ENCODE measurements at regions of chr3 and their contacts with region 1.

Region 1: DNA sequence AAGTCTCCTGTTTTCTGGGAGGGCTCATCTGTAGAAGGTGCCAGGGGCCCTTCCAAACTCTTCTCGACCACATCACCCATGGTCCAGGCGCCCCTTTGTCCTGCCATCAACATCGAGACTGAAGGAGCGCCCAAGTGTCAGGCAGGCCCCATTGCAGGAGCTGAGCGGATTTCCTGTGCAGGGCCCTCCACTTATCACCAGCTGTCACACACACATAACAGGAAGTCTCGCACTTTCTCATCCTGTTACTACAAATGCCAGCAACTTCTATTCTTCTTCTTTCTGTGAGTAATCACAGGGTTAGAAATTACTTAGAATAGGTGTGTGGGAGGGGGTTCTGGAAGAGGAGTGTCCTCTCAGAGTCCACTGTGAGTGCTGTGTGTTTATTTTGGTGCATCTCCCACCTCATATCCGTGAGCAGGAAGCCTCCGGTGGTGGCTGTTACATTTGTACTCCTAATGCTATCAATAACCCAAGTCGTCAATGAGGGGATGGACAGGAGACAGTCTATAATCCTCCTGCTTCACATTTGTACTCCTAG is at the start of gene KLHL6:
- DNase-seq: peak; percentile 47 to 81 (median 74)
- ATAC-seq: peak; percentile 93
- H3K4me3 ChIP-seq: peak within 1 kb of the TSS; percentile 82
- H3K4me3 Mint-ChIP-seq: peak within 1 kb of the TSS; percentile 95 to 100 (median 98)
- H3K27ac ChIP-seq: peak within 1 kb of the TSS; percentile 78
- H3K27ac Mint-ChIP-seq: peak within 1 kb of the TSS; percentile 95 to 100 (median 98)
- H3K4me1 ChIP-seq: peaks cover 15 to 17% of the 10 kb centered on the region in 2 donors
- H3K4me1 Mint-ChIP-seq: peaks cover 46 to 58% (median 50%) of the 10 kb centered on the region in 7 donors
- H3K27me3 ChIP-seq: no peaks in the 10 kb centered on the region
- H3K27me3 Mint-ChIP-seq: no peaks in the 10 kb centered on the region
- total RNA-seq, gene KLHL6: 37.7 to 72.9 (median 41.5) TPM

Region 2: GRCh38 chr3:183285828-183286457 is 269.7 kb before region 1 on chr3:
- CTCF ChIA-PET with region 1: no interaction called
- POLR2A ChIA-PET with region 1: no interaction called
- intact Hi-C with region 1: loop called in 1 of 2 experiments (anchors 10 kb)
- DNase-seq: peak; percentile 60 to 96 (median 83)
- ATAC-seq: peak; percentile 97
- H3K4me3 ChIP-seq: no peak overlapping the region
- H3K4me3 Mint-ChIP-seq: peak overlapping the region in 9 of 10 donors; percentile 47 to 81 (median 68)
- H3K27ac ChIP-seq: peak overlapping the region; percentile 44
- H3K27ac Mint-ChIP-seq: peak overlapping the region; percentile 73 to 93 (median 86)
- H3K4me1 ChIP-seq: peaks cover 14 to 19% of the 10 kb centered on the region in 2 donors
- H3K4me1 Mint-ChIP-seq: peaks cover 0 to 30% (median 18%) of the 10 kb centered on the region in 7 donors
- H3K27me3 ChIP-seq: no peaks in the 10 kb centered on the region
- H3K27me3 Mint-ChIP-seq: no peaks in the 10 kb centered on the region

Region 3: DNA sequence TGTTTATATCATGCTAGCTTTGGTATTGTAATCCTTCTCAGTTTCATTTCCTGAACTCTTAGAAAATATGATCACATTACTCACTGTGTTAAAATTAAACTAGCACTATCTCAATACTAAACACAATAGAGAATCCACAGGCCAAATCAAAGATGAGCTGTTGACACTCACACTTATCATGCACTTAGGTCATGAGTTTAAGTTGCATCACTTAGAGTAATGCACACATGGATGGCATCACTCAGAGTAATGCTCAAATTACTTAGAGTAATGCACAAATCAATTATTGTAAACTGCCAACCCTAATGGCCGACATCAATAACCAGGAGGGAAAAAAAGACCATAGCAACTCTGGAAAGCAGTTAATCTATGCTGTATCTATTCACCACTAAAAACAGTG is 87.2 kb before region 1 on chr3:
- CTCF ChIA-PET with region 1: interaction called, 9 read pairs
- POLR2A ChIA-PET with region 1: interaction called, 7 read pairs
- intact Hi-C with region 1: loop called (anchors 1 kb)
- DNase-seq: no peak
- ATAC-seq: no peak
- H3K4me3 ChIP-seq: no peak overlapping the region
- H3K4me3 Mint-ChIP-seq: no peak overlapping the region
- H3K27ac ChIP-seq: no peak overlapping the region
- H3K27ac Mint-ChIP-seq: peak overlapping the region in 1 of 9 donors; percentile 27
- H3K4me1 ChIP-seq: peaks cover 0 to 5% of the 10 kb centered on the region in 2 donors
- H3K4me1 Mint-ChIP-seq: peaks cover 2 to 18% (median 5%) of the 10 kb centered on the region in 7 donors
- H3K27me3 ChIP-seq: no peaks in the 10 kb centered on the region
- H3K27me3 Mint-ChIP-seq: peaks cover 0 to 4% (median 0%) of the 10 kb centered on the region in 5 donors

Region 4: DNA sequence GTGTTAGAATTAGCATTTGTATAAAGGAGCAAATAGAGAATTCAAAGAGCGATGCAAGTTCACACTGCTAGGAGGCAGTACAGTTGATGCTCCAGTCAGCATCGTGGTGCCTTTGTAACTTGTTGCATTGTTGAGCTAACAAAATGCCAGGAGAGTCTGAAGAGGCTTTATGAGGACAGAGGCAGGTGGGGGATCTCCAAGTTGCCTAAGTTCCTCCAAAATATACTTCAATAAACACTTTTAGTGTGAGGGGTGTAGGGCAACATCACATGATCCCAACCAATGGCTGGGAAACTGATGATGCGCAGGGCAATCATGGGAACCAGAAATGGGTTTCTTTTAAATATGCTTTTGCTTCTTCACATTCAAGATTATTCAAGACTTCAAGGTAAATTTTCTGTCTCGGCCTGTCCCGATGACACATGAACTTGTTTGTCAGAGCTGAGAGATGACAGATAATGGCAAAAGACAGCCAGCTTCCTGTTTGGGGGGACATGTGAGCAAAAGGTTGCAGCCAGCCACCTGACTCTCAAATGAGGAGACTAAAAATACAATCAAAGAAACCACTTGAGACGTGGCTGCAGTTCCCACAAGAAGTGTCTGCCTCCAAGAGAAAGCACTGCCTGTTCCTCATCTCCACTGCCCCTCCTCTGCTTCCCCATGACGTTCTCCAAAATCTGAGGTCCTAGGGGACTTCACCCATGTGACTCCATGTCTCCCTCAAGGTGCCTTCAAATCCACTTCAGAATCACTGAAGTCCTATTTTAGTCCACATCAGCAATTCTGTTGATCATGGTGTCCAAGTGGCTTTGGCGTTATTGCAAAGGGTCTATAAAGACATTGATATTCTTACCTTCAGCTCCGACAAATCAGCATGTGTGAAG is 39.4 kb before region 1 on chr3:
- CTCF ChIA-PET with region 1: interaction called, 3 read pairs
- POLR2A ChIA-PET with region 1: interaction called, 5 read pairs
- intact Hi-C with region 1: loop called (anchors 1 kb)
- DNase-seq: peak in 8 of 9 donors; percentile 34 to 90 (median 77)
- ATAC-seq: peak; percentile 80
- H3K4me3 ChIP-seq: peak overlapping the region; percentile 8
- H3K4me3 Mint-ChIP-seq: peak overlapping the region; percentile 39 to 84 (median 68)
- H3K27ac ChIP-seq: peak overlapping the region; percentile 57
- H3K27ac Mint-ChIP-seq: peak overlapping the region; percentile 77 to 94 (median 89)
- H3K4me1 ChIP-seq: peaks cover 32 to 54% of the 10 kb centered on the region in 2 donors
- H3K4me1 Mint-ChIP-seq: peaks cover 60 to 95% (median 90%) of the 10 kb centered on the region in 7 donors
- H3K27me3 ChIP-seq: no peaks in the 10 kb centered on the region
- H3K27me3 Mint-ChIP-seq: no peaks in the 10 kb centered on the region

Region 5: DNA sequence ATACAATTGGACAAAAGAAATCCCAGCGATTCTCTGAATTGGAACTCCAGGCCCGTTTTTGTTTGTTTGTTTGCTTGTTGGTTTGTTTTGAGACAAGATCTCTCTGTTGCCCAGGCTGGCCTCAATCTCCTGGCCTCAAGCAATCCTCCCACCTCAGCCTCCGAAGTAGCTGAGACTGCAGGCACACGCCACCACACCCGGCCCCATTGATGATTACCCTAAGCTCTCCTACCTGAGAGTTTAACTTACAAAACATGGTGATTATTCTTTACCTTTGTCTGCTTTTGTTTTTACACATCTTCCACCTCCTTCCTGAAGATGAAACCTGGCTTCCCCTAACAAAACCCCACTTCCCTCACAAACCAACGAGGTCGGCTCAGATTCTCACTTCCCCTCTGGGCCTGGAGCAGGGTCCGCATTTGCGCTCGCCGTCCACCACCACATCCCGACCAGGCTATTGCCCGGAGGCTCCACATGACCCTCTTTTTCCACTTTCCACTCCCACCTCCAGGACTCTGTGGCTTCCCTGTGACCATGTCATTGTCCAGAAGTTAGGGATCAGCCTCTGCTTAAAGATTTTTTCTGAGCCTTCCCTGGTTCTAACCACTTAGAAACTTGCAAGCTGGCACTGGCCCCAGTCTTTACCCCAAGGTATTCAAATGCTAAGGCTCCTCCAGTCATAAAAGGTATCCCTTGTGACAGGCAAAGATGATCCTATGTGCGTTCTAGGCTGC is 14.9 kb before region 1 on chr3:
- CTCF ChIA-PET with region 1: interaction called, 4 read pairs
- POLR2A ChIA-PET with region 1: interaction called, 6 read pairs
- intact Hi-C with region 1: loop called in 1 of 2 experiments (anchors 1 kb)
- DNase-seq: no peak
- ATAC-seq: peak; percentile 23
- H3K4me3 ChIP-seq: no peak overlapping the region
- H3K4me3 Mint-ChIP-seq: peak overlapping the region; percentile 39 to 80 (median 58)
- H3K27ac ChIP-seq: no peak overlapping the region
- H3K27ac Mint-ChIP-seq: peak overlapping the region; percentile 68 to 93 (median 80)
- H3K4me1 ChIP-seq: peaks cover 11 to 57% of the 10 kb centered on the region in 2 donors
- H3K4me1 Mint-ChIP-seq: peaks cover 69 to 99% (median 97%) of the 10 kb centered on the region in 7 donors
- H3K27me3 ChIP-seq: no peaks in the 10 kb centered on the region
- H3K27me3 Mint-ChIP-seq: no peaks in the 10 kb centered on the region

Region 6: DNA sequence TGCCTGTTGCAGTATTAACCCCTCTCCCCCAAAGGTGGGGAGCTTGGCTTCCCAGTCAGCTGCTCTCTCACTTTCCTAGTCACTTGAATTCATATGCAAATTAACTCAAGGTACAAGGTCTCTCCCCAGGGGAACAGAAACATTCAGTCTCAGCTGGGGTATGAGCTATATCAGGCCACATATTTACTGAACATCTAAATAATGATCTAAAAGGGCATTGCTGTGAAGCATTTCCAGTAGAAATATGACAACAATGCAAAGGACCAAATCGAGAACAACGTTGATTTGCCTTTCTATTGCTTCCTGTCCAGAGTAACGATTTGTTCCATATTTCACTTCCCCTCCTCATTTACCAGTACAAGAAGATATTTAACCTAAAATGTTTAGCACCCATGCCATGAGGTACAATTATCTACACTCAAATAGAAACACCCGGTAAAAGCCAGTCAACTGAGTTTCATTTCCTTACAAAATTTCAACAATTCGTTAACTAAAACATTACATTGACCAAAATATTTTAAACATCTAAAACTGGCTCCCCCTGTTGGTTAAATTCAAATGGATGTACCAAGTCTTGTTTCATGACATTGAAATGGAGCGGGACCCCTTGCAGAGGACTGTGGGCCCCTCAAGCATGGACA is 36.4 kb after region 1 on chr3:
- CTCF ChIA-PET with region 1: interaction called, 3 read pairs
- POLR2A ChIA-PET with region 1: interaction called, 6 read pairs
- intact Hi-C with region 1: loop called (anchors 1 to 2 kb)
- DNase-seq: peak in 6 of 9 donors; percentile 11 to 48 (median 40)
- ATAC-seq: peak; percentile 44
- H3K4me3 ChIP-seq: no peak overlapping the region
- H3K4me3 Mint-ChIP-seq: peak overlapping the region in 9 of 10 donors; percentile 37 to 86 (median 70)
- H3K27ac ChIP-seq: no peak overlapping the region
- H3K27ac Mint-ChIP-seq: peak overlapping the region in 8 of 9 donors; percentile 39 to 93 (median 62)
- H3K4me1 ChIP-seq: peaks cover 6 to 39% of the 10 kb centered on the region in 2 donors
- H3K4me1 Mint-ChIP-seq: peaks cover 24 to 53% (median 44%) of the 10 kb centered on the region in 7 donors
- H3K27me3 ChIP-seq: no peaks in the 10 kb centered on the region
- H3K27me3 Mint-ChIP-seq: peaks cover 0 to 2% (median 0%) of the 10 kb centered on the region in 5 donors

Region 7: DNA sequence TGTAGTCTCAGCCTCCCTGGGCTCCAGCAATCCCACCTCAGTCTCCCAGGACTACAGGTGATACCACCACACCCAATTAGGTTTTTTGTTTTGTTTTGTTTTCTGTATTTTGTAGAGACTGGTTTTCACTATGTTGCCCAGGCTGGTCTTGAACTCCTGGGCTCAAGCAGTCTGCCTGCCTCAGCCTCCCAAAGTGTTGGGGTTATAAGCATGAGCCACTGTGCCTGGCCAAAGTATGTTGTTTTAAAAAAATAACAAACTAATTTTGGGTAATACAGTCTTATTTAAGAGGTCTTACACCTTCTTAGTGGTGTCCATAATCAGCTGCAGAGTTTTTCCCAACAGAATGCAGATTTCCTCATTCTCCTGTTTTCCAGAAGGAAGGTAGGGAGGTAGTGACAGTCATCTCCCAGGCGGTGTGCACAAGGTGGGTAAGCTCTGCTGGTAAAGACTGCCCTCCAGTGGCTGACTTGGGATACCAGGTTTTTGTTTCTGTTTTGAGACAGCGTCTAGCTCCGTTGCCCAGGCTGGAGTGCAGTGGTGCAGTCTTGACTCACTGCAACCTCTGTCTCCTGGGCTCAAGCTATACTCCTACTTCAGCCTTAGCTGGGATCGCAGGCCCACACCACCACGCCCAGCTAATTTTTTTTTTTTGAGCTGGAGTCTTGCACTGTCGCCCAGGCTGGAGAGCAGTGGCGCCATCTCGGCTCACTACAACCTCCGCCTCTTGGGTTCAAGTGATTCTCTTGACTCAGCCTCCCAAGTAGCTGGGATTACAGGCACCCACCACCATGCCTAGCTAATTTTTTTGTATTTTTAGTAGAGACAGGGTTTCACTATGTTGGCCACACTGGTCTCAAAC is 211.4 kb after region 1 on chr3:
- CTCF ChIA-PET with region 1: interaction called, 9 read pairs
- POLR2A ChIA-PET with region 1: no interaction called
- intact Hi-C with region 1: loop called (anchors 1 to 2 kb)
- DNase-seq: peak; percentile 41 to 72 (median 65)
- ATAC-seq: peak; percentile 96
- H3K4me3 ChIP-seq: no peak overlapping the region
- H3K4me3 Mint-ChIP-seq: no peak overlapping the region
- H3K27ac ChIP-seq: no peak overlapping the region
- H3K27ac Mint-ChIP-seq: peak overlapping the region in 4 of 9 donors; percentile 3 to 73 (median 40)
- H3K4me1 ChIP-seq: no peaks in the 10 kb centered on the region
- H3K4me1 Mint-ChIP-seq: peaks cover 5 to 18% (median 12%) of the 10 kb centered on the region in 7 donors
- H3K27me3 ChIP-seq: no peaks in the 10 kb centered on the region
- H3K27me3 Mint-ChIP-seq: no peaks in the 10 kb centered on the region

Region 8: DNA sequence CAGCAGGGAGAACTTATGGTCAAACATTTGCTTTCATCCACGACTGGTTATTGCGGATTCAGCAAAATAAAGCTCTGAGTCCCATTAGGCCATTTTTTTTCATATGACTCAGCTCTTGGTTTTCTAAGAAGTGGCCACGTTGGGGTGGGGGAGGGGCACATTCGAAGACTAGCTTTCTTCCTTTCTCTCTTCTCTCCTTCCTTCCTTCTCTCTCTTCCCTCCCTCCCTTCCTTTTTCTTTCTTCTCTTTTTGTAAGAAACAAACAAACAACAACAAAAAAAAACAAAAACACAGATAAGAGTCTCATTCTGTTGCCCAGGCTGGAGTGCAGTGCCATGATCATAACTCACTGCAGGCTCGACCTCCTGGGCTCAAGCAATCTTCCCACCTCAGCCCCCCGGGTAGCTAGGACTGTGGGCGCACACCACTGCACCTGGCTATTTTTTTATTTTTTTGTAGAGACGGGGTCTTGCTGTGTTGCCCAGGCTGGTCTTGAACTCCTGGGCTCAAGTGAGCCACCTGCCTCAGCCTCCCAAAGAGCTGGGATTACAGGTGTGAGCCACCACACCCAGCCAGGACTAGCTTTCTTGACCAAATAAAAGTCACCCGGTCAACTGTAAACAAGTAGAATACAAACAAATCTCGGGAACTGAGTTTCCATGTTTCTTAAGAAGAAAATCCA is 420.5 kb after region 1 on chr3:
- CTCF ChIA-PET with region 1: no interaction called
- POLR2A ChIA-PET with region 1: no interaction called
- intact Hi-C with region 1: no loop called
- DNase-seq: no peak
- ATAC-seq: no peak
- H3K4me3 ChIP-seq: no peak overlapping the region
- H3K4me3 Mint-ChIP-seq: no peak overlapping the region
- H3K27ac ChIP-seq: no peak overlapping the region
- H3K27ac Mint-ChIP-seq: no peak overlapping the region
- H3K4me1 ChIP-seq: no peaks in the 10 kb centered on the region
- H3K4me1 Mint-ChIP-seq: peaks cover 0 to 2% (median 0%) of the 10 kb centered on the region in 7 donors
- H3K27me3 ChIP-seq: no peaks in the 10 kb centered on the region
- H3K27me3 Mint-ChIP-seq: no peaks in the 10 kb centered on the region